Cardiac septum (tissue), 1 donor: ENCODE measurements at regions of chr17 and their contacts with region 1.

Region 1: DNA sequence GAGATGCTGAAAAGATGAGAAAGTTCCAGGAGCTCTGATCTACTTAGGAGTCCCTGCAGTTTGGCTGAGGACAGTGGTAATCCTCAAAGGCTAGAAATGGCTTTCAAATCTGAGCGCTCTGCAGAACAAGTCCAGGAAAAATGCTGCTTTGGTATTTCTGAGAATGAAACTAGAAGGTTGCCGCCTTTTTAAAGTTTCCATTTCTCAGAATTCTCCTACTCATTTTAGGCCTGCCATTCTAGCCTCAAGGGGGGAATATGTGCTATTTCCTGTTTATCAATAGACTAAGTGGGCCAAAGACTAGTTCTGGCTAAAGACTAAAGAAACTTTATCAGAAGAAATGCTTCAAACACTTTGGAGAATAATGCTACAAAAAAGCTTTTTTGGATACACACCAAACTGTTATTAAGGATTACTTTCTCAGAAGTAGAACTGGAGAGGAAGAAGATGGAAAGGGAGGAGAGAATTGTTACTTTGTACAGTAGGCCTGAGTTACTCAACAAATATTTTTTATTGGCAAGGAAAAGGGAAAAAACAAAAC is at the start of gene SLFN12L:
- DNase-seq: no peak
- total RNA-seq, gene SLFN12L: 0.92 TPM

Region 2: DNA sequence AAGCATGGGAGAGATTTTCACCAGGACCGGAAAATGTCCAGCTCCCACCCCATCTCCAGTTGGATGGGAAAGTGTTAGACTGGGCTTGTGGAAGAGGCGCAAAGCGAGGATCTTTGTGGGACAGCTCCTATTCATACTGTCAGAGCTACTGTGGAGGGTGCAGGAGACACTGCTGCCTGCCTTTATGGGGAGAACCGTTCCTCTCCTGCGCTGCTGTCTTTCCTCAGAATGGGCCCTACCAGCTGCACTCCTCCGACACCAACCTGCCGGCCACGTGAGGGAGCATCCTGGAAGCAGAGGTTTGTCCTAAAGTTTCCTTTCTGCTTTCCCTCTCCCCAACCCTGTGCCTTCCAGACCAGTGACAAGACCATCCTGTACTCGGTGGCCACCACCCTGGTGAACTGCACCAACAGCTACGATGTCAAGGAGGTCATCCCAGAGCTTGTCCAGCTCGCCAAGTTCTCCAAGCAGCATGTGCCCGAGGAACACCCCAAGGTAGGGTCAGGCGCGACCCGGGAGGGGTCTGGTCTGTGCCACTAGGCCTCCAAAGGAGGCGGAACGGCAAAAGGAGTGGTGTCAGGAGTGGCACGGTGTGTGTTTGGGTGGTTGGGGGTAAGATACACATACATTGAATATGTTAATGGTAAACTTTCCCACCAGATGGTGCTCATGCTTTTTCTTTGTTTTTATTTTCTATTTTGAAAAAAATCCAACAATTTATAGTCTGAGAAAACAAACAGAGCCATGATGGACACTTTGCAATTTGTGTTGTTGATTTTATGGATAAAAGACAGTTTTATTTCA is 366.5 kb before region 1 on chr17:
- intact Hi-C with region 1: loop called (anchors 5 kb)
- DNase-seq: no peak

Region 3: GRCh38 chr17:35242805-35243560 is 294.7 kb before region 1 on chr17 and contains the start of gene SLFN5:
- intact Hi-C with region 1: loop called (anchors 5 kb)
- DNase-seq: peak; percentile 97
- total RNA-seq, gene SLFN5: 13.8 TPM

Region 4: DNA sequence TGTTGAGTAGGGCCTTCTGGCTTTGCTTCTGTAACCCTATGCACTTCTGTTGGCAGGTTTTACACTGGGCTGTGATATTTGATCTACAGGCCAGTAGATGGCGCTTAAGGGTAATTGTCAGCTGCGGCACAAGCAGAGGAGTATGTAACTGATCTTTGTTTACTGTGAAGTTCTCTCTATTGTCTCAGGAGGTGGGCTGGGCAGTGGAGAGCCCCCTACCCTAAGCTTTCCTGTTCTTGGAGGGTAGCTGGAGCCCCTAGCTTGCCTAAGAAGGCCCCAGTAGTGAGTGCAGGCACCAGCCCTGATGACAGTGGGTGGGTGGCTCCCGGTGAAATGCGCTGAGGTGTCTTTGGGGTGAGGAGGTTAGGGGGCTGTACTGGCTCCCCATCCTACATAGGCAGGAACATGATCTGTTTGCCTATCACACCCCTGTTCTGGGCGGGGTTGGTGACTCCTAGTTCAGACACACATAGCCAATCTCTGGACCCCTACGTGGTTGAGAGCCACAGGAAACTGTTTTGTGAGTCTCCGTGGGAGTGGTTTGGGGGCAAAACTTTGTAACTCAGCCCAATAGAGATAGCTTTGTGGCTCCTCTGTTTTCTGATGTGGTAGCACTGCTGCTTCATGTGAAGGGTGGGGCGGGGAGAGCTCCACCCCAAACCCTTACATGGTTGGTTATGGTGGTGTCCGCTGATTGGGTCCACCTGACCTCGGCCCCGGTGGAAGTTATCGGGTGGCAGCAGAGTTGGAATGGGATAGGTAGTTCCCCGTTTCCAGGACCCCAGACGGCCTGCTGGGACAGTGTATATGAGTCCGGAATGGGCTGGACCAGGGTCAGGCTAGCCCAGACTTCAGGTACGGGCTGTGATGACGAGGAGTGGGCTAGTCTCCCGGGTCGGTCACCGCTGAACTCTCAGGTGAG is 224.6 kb before region 1 on chr17:
- intact Hi-C with region 1: loop called (anchors 2 kb)
- DNase-seq: no peak

Region 5: DNA sequence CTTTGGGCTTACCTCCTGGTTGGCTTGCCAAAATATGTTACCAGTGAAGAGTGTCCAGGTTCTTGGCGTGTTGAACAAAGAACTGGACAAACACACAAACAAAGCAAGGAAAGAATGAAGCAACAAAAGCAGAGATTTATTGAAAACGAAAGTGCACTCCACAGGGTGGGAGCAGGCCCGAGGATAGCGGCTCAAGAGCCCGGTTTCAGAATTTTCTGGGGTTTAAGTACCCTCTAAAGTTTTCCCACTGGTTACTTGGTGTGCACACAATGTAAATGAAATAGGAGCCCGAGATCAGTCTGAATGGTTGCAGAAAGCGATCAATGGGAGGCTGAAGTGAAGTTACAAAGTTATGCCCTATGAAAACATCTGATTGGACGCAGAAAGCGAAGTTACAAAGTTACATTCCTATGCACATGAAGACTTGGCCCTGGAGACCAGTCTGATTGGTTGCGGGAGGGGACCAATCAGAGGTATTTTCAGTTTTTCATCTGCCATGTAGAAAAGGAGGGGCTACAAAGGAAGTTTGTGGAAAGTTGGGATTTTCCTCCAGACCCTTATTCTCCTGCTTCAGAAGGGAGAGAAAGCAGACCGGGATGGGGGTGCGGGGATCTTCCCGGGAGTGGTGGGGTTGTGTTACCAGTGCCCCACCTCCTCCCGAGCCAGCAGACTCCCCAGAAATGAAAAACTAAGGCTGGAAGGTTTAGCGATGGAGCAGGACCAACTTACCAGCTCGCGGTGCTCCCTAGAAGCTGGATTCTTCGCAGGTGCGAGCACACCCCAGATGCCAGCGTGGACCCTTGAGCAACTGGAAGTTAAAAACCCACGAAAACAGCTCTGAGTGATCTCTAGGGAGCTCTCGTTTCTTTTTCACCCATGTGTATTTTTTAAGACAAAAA is 105.2 kb before region 1 on chr17 and contains the start of gene SLFN12:
- intact Hi-C with region 1: loop called (anchors 5 kb)
- DNase-seq: no peak
- total RNA-seq, gene SLFN12: 4.3 TPM